Common myeloid progenitor, CD34-positive (primary cell): ENCODE measurements at regions of chr11 and their contacts with region 1.

Region 1: GRCh38 chr11:124070915-124071635 is 29.9 kb upstream of the OR10G7 start:
- DNase-seq: peak; percentile 87 to 91 (median 88)
- H3K4me3 ChIP-seq: peak overlapping the region in 2 of 7 experiments; percentile 39 to 53
- H3K27ac ChIP-seq: peak overlapping the region; percentile 42 to 76
- H3K4me1 ChIP-seq: peaks cover 7 to 31% (median 28%) of the 10 kb centered on the region in 4 experiments
- H3K27me3 ChIP-seq: peaks cover 0 to 1% (median 0%) of the 10 kb centered on the region in 5 experiments

Region 2: GRCh38 chr11:124194698-124195410 is 123.8 kb after region 1 on chr11:
- CTCF ChIA-PET with region 1: interaction called, 24 read pairs
- POLR2A ChIA-PET with region 1: no interaction called
- DNase-seq: peak; percentile 48 to 79 (median 67)
- H3K4me3 ChIP-seq: no peak overlapping the region
- H3K27ac ChIP-seq: no peak overlapping the region
- H3K4me1 ChIP-seq: peaks cover 0 to 10% (median 2%) of the 10 kb centered on the region in 4 experiments
- H3K27me3 ChIP-seq: no peaks in the 10 kb centered on the region

Region 3: GRCh38 chr11:124329787-124330478 is 258.9 kb after region 1 on chr11:
- CTCF ChIA-PET with region 1: interaction called, 11 read pairs
- POLR2A ChIA-PET with region 1: no interaction called
- DNase-seq: peak; percentile 35 to 79 (median 72)
- H3K4me3 ChIP-seq: peak overlapping the region in 1 of 7 experiments; percentile 40
- H3K27ac ChIP-seq: no peak overlapping the region
- H3K4me1 ChIP-seq: peaks cover 0 to 14% (median 1%) of the 10 kb centered on the region in 4 experiments
- H3K27me3 ChIP-seq: no peaks in the 10 kb centered on the region